Dorsolateral prefrontal cortex (tissue), 120 donors: ENCODE measurements at regions of chr10 and their contacts with region 1.

Region 1: GRCh38 chr10:117094856-117095255 is 43.2 kb downstream of the VAX1 start:
- DNase-seq: peak in 7 of 10 donors; percentile 32 to 76 (median 44)
- H3K4me3 ChIP-seq: peak overlapping the region in 1 of 59 donors; percentile 12
- H3K27ac ChIP-seq: peak overlapping the region in 58 of 59 donors; percentile 14 to 93 (median 78)
- H3K27me3 ChIP-seq: no peaks in the 10 kb centered on the region
- CTCF ChIP-seq: peak in 6 of 56 donors; percentile 5 to 20 (median 16)

Region 2: GRCh38 chr10:116796910-116797513 is 297.8 kb before region 1 on chr10:
- intact Hi-C with region 1: loop called in 1 of 2 experiments (anchors 5 kb)
- DNase-seq: peak; percentile 70 to 84 (median 80)
- H3K4me3 ChIP-seq: no peak overlapping the region
- H3K27ac ChIP-seq: no peak overlapping the region
- H3K27me3 ChIP-seq: peaks cover 0 to 4% (median 0%) of the 10 kb centered on the region in 45 donors
- CTCF ChIP-seq: peak; percentile 89 to 100 (median 97)

Region 3: DNA sequence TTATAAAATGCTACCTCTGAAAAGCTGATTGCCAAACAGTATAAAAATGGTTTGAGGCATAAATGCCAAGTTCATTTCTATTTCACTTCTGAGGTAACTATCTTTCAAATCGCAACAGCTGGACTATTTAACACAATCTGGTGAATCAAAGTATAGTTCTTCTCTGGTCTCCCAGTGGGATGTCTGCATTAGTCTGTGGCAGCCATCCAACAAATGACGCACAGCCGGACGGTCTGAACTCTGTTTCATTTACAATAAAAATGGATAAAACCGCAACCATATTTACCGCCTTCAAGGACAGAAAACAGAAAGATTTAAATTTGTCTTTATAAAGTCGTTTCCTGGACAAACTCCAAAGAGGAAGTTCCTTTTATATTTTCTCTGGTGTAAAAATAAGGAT is 203.6 kb before region 1 on chr10:
- intact Hi-C with region 1: loop called in 1 of 2 experiments (anchors 10 kb)
- DNase-seq: peak in 6 of 10 donors; percentile 42 to 66 (median 60)
- H3K4me3 ChIP-seq: peak overlapping the region in 7 of 59 donors; percentile 0 to 30 (median 8)
- H3K27ac ChIP-seq: peak overlapping the region in 30 of 59 donors; percentile 0 to 74 (median 38)
- H3K27me3 ChIP-seq: no peaks in the 10 kb centered on the region
- CTCF ChIP-seq: no peak

Region 4: GRCh38 chr10:116974473-116975005 is 120.3 kb before region 1 on chr10:
- intact Hi-C with region 1: loop called in 1 of 2 experiments (anchors 10 kb)
- DNase-seq: no peak
- H3K4me3 ChIP-seq: peak overlapping the region in 3 of 59 donors; percentile 5 to 23 (median 18)
- H3K27ac ChIP-seq: peak overlapping the region in 58 of 59 donors; percentile 86 to 99 (median 96)
- H3K27me3 ChIP-seq: no peaks in the 10 kb centered on the region
- CTCF ChIP-seq: no peak

Region 5: DNA sequence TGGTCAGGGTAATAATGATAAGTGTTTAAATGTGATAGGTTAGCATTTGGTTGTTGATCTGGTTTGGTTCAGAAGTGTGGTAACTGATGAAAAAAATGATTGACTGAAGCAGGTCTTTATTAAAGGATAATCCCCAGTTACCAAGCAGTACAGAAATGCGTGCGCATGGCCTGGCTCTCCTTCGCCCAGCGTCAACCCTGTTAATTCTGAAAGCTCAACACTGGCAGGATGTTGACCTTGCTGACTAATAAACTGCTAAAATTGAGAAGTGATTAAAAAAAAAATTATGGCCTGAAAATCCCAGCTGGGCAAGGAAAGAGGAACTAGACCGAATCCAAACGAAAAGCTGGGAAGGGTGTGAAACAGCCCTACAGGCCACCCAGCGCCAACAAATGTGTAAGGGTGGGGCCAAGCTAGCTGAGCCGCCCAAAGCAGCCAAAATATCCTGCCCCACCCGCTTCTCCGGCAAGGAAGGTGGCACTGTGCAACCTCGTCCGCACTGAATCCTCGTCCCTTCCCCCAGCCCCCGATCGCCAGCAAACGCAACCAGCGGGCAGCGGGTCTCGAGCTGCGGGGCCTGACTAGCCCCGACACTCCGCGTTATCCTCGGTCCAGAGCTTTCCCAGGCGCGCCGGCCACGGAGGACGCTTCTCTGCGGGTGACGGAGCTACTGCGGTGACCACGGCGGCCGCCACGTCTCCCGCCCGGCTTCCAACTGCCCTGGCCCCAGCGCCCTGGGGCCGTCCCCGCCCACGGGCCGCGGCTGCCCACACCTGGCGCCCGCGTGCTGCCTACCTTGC is 90.4 kb before region 1 on chr10:
- intact Hi-C with region 1: no loop called
- DNase-seq: peak; percentile 45 to 75 (median 66)
- H3K4me3 ChIP-seq: peak overlapping the region; percentile 54 to 97 (median 85)
- H3K27ac ChIP-seq: peak overlapping the region; percentile 58 to 99 (median 98)
- H3K27me3 ChIP-seq: no peaks in the 10 kb centered on the region
- CTCF ChIP-seq: peak in 9 of 56 donors; percentile 8 to 20 (median 13)

Region 6: DNA sequence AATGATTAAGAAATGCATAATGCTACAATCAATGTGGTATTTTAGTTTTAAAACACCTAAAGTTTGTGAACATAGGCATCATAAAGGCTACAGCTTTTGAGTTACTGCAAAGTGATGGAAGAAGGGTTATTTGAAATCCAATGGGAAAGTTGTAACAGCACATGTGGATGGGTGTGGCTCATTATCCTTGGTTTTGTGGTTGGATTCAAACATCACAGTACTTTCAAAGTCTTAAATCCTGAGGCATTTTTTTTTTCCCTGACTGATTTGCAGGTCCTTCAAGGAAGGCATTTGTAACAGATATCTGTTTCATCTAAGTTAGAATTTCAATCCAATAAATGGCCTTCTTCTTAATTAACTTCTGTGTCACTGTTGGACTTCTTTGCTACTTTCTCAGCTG is 80.0 kb before region 1 on chr10:
- intact Hi-C with region 1: loop called in 1 of 2 experiments (anchors 10 kb)
- DNase-seq: no peak
- H3K4me3 ChIP-seq: no peak overlapping the region
- H3K27ac ChIP-seq: peak overlapping the region in 5 of 59 donors; percentile 4 to 52 (median 26)
- H3K27me3 ChIP-seq: no peaks in the 10 kb centered on the region
- CTCF ChIP-seq: no peak

Region 7: DNA sequence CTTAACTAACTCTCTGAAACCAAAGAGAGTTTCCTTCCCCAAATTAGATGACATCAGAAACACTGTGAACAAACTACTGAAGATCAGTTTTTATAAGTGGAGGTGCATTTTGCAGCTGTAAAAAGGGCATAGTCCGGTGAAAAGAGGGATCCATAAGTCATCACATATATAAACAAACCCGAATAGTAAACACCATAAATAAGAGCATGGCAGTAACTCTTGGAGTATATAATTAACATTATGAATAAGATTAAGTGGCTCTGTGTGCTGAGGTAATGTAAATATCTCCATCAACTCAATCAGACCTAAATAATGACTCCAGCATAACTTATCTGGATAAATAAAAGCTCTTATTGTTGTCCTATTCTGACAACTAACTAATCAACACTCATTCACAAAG is 46.9 kb before region 1 on chr10:
- intact Hi-C with region 1: no loop called
- DNase-seq: no peak
- H3K4me3 ChIP-seq: no peak overlapping the region
- H3K27ac ChIP-seq: no peak overlapping the region
- H3K27me3 ChIP-seq: no peaks in the 10 kb centered on the region
- CTCF ChIP-seq: no peak

Region 8: GRCh38 chr10:117167789-117168674 is 73.2 kb after region 1 on chr10:
- intact Hi-C with region 1: loop called (anchors 5 kb)
- DNase-seq: peak; percentile 17 to 85 (median 57)
- H3K4me3 ChIP-seq: peak overlapping the region in 56 of 59 donors; percentile 1 to 63 (median 44)
- H3K27ac ChIP-seq: peak overlapping the region in 10 of 59 donors; percentile 1 to 58 (median 32)
- H3K27me3 ChIP-seq: peaks cover 0 to 94% (median 70%) of the 10 kb centered on the region in 45 donors
- CTCF ChIP-seq: peak; percentile 56 to 98 (median 90)